Activated CD4-positive, alpha-beta T cell treated with anti-CD3 and anti-CD28 coated beads for 36 hours (primary cell): ENCODE measurements at regions of chr3 and their contacts with region 1.

Region 1: GRCh38 chr3:140203510-140203909 is 268.5 kb downstream of the CLSTN2 start:
- DNase-seq: no peak
- ATAC-seq: no peak
- H3K4me3 Mint-ChIP-seq: no peak overlapping the region
- H3K27ac Mint-ChIP-seq: no peak overlapping the region
- H3K4me1 Mint-ChIP-seq: no peaks in the 10 kb centered on the region
- H3K27me3 Mint-ChIP-seq: peaks cover 10% of the 10 kb centered on the region

Region 2: DNA sequence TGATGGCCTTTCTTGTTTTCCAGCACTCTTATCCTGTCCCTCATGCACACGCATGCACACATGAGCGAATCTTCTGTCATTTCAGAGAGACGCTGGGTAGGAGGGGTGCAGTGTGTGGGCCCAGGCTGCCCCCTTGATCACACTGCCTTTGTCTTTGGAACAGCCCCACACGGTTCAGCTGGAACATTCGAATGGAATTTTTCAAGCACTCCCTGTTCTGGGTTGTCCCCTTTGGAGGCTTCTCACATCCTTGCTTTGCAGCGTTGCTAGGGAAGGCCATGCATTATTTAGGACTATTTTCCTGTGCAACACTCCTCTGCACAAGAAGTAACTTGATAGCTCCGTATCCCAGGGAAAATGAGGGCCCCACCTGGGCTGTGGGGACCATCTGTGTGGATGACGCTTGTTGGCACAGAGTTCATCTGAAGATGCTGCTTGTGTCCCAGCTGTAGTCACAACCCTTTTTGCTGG is 926.1 kb after region 1 on chr3:
- CTCF ChIA-PET with region 1: no interaction called
- POLR2A ChIA-PET with region 1: no interaction called
- intact Hi-C with region 1: loop called in 1 of 2 experiments (anchors 5 kb)
- DNase-seq: no peak
- ATAC-seq: no peak
- H3K4me3 Mint-ChIP-seq: no peak overlapping the region
- H3K27ac Mint-ChIP-seq: no peak overlapping the region
- H3K4me1 Mint-ChIP-seq: no peaks in the 10 kb centered on the region
- H3K27me3 Mint-ChIP-seq: peaks cover 2% of the 10 kb centered on the region